ENCODE measurements at regions of chr10 and their contacts with region 1.

Region 1: DNA sequence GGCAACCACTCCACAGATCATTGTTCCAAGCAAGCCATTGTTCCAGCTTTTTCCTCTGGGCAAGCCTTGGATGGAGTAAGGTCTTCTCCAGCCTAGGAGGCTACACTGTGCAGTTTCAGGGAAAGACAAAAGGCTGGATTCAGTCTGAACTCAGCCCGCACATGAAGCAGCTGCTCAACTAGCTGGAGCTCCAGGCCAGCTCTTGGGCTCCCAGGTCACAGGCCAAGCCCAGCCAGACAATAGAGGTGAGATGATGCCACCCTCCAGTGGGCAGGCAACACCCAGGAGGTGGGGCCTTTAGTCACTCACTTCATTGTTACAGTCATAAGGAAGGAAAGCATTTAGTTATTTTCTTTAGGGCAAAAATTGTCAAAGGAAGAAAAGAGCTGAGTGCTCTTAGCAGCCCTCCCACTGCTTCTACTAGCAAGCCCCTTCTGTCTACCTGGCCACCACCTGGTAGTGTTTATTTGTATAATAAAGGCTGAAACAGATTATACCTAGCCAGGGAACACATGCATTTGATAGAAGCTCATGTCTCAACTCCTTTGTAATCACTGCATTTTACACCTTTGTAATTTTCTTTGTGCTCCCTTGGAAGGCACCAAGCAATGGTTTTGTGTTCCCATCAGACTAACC is 253.4 kb downstream of the WDR11 start:
- DNase-seq: no peak
- ATAC-seq: no peak

Region 2: GRCh38 chr10:120948889-120949608 is 155.5 kb before region 1 on chr10:
- intact Hi-C with region 1: loop called (anchors 10 kb)
- DNase-seq: peak; percentile 88
- ATAC-seq: peak; percentile 96

Region 3: DNA sequence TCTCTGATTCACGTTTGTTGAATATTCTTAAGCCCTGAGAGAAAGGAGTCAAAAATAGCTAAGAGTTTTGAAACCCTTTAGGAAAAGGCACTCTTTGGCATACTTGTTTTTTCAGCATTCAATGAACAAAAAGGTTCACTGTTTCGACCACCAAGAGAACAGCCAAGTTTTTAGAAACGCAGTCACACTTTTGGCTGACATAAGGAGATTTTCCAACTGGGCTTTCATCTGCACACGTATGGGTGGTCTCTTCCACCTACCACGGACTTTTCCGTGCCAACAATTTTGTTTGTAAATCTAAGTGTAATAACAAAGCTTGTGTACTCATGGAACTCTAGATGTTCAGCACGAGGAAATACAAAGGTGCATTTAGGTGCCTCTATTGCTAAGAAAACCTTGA is 16.9 kb after region 1 on chr10:
- intact Hi-C with region 1: no loop called
- DNase-seq: no peak
- ATAC-seq: no peak